ENCODE measurements at regions of chr17 and their contacts with region 1.

Region 1: GRCh38 chr17:76868176-76868668 is at the start of gene MGAT5B:
- DNase-seq: peak; percentile 77
- H3K4me3 Mint-ChIP-seq: peak within 1 kb of the TSS; percentile 59
- H3K27ac Mint-ChIP-seq: no peak within 1 kb of the TSS
- H3K4me1 Mint-ChIP-seq: peaks cover 9% of the 10 kb centered on the region
- H3K27me3 Mint-ChIP-seq: peaks cover 18% of the 10 kb centered on the region
- total RNA-seq, gene MGAT5B: 0.38 TPM in 1 of 2 experiments, not detected in the other

Region 2: DNA sequence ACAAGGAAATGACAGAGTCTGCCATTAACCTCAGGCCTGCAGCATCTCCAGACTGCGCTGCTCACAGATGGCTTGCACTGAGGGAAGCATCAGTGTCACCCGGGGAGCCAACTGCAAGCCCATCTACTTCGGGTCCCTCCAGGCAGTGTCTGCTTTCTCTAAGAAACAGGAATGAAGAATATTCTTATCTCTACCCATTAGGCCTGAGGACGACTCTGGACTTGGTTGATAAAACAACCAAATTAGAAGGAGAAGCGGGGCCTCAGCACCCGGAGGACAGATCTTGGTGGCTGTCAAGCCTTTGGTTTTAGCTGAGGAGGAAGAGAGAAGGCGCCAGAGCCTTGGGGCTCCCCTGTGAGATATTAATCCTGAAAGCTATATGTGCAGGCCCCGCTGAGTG is 19.6 kb before region 1 on chr17:
- CTCF ChIA-PET with region 1: interaction called, 11 read pairs
- POLR2A ChIA-PET with region 1: no interaction called
- intact Hi-C with region 1: no loop called
- DNase-seq: no peak
- H3K4me3 Mint-ChIP-seq: no peak overlapping the region
- H3K27ac Mint-ChIP-seq: no peak overlapping the region
- H3K4me1 Mint-ChIP-seq: no peaks in the 10 kb centered on the region
- H3K27me3 Mint-ChIP-seq: peaks cover 32% of the 10 kb centered on the region

Region 3: GRCh38 chr17:76948726-76949342 is 80.6 kb after region 1 on chr17:
- CTCF ChIA-PET with region 1: no interaction called
- POLR2A ChIA-PET with region 1: no interaction called
- intact Hi-C with region 1: no loop called
- DNase-seq: no peak
- H3K4me3 Mint-ChIP-seq: no peak overlapping the region
- H3K27ac Mint-ChIP-seq: no peak overlapping the region
- H3K4me1 Mint-ChIP-seq: no peaks in the 10 kb centered on the region
- H3K27me3 Mint-ChIP-seq: no peaks in the 10 kb centered on the region

Region 4: DNA sequence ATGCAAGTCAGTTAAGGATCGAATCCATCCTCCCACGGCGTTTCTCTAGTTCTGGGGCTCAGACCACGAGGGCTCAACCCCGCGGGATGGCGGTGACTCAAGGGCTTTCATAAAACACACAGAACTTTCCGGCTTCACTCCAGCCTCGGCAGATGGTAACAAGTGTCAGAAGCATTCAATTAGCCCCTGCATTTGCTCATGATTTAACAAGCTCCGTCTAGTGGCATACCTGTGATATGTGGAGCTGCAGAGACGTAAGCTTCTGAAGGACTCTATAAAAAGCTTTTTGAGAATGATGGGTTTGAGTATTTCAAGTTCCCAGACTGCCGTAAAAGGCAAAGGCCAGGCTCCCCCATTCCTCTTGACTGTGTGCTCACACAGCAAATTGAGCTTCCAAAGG is 181.2 kb after region 1 on chr17:
- CTCF ChIA-PET with region 1: interaction called, 87 read pairs
- POLR2A ChIA-PET with region 1: no interaction called
- intact Hi-C with region 1: no loop called
- DNase-seq: no peak
- H3K4me3 Mint-ChIP-seq: no peak overlapping the region
- H3K27ac Mint-ChIP-seq: no peak overlapping the region
- H3K4me1 Mint-ChIP-seq: no peaks in the 10 kb centered on the region
- H3K27me3 Mint-ChIP-seq: no peaks in the 10 kb centered on the region

Region 5: DNA sequence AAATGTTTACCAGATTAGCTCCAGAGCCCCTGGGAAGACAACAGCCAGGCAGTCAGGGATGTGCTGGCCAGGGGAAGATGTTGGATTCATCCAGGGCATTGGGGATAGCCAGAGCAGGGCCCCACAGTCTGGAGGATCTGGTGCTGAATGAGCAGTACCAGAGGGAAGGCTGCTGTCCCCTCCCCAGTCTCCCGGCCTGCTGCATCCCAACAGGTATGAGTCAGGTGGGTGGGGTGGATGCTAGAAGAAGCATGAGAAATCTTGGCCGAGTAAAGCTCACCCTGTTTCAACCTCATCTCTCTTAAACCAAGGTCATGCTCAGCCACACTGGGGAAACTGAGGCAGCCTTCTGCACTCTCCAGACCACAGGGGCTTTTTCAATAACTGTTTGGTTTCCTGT is 200.7 kb after region 1 on chr17:
- CTCF ChIA-PET with region 1: interaction called, 30 read pairs
- POLR2A ChIA-PET with region 1: interaction called, 3 read pairs
- intact Hi-C with region 1: no loop called
- DNase-seq: no peak
- H3K4me3 Mint-ChIP-seq: no peak overlapping the region
- H3K27ac Mint-ChIP-seq: no peak overlapping the region
- H3K4me1 Mint-ChIP-seq: no peaks in the 10 kb centered on the region
- H3K27me3 Mint-ChIP-seq: peaks cover 24% of the 10 kb centered on the region

Region 6: GRCh38 chr17:77247048-77247541 is 378.9 kb after region 1 on chr17:
- CTCF ChIA-PET with region 1: interaction called, 4 read pairs
- POLR2A ChIA-PET with region 1: no interaction called
- intact Hi-C with region 1: loop called (anchors 5 kb)
- DNase-seq: peak; percentile 88
- H3K4me3 Mint-ChIP-seq: peak overlapping the region; percentile 50
- H3K27ac Mint-ChIP-seq: no peak overlapping the region
- H3K4me1 Mint-ChIP-seq: peaks cover 9% of the 10 kb centered on the region
- H3K27me3 Mint-ChIP-seq: peaks cover 14% of the 10 kb centered on the region